GM12878 (cell line): ENCODE measurements at regions of chr14 and their contacts with region 1.

Region 1: DNA sequence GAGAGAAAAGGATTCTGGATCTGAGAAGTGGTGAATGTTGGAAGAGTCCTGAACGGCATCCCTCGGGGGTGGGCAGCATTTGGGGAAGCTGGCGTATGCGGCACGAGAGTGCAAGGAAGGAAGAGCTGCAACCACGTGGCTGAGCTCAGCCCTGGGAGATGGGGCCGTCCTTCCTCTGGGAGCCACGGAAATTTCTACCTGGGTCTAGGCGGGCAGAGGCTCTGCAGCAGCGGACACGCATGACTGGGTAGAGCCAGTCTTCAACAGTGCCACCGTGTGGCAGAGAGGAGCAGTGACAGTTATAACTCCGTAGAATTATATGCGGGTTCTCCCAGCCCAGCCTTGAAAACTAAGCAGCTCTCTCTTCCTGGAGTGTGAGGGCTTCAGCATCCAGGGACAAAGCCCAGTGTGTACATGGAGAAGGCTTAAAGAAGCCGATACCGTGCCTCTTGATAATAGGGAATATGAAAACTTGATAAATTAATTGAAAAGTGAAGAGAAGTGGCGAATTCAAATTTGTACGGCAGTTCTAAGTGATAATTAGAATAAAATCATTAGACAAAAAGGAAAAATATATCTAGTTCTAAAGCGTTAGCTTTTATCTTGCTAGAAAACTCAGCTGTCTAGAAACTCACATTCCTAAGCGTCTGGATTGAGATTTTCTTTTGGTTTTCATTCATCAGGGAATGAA is 82.9 kb upstream of the STXBP6 start:
- DNase-seq: no peak
- ATAC-seq: peak; percentile 97
- H3K4me3 ChIP-seq: no peak overlapping the region
- H3K27ac ChIP-seq: no peak overlapping the region
- H3K4me1 ChIP-seq: no peaks in the 10 kb centered on the region
- H3K27me3 ChIP-seq: no peaks in the 10 kb centered on the region
- CTCF ChIP-seq: peak; percentile 76 to 79 (median 76)
- EP300 ChIP-seq: no peak
- POLR2A ChIP-seq: no peak
- RAD21 ChIP-seq: peak; percentile 57

Region 2: DNA sequence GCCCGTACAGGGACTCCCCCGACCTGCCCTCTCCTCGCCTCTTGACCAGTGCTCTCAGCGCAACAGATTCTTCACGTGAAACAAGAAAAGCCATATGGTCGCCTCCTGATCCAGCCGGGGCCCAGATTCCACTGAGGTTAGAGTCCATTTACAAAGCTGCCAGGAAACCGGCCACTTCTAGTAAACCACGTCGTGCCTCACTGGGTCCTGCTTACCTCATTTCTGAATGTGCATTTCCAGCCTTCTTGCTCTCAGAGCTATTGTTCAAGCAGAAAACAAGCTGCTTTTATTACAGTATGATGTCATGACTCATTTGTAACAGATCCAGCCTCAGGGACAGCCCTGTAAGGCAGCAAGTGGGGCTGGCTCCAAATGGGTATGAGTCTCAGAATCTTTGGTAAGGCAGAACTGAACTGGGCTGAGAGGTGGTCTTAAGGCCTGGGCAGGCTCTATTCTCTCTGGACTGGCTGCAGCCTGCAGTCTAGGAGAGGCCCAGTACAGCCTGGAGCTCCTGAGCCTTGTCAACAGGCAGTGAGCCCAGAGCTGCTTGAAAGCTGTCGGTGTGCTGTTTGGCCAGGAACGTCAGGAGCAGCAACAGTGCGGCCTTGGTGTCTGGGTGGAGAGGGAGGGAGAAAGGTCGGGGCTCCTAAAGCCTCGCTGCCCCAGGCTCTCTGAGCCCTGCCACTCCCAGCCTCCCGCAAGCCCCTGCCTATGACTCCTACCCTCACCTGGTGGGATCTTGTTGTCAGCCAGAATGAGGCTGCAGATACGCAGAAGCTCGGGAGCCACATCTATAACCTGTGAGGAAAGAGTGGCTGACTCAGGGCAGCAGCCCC is 952.7 kb before region 1 on chr14:
- CTCF ChIA-PET with region 1: no interaction called
- POLR2A ChIA-PET with region 1: no interaction called
- RAD21 ChIA-PET with region 1: no interaction called
- SMC1A ChIA-PET with region 1: no interaction called
- in situ Hi-C with region 1: no loop called
- intact Hi-C with region 1: no loop called
- DNase-seq: no peak
- ATAC-seq: peak; percentile 52
- H3K4me3 ChIP-seq: no peak overlapping the region
- H3K27ac ChIP-seq: no peak overlapping the region
- H3K4me1 ChIP-seq: no peaks in the 10 kb centered on the region
- H3K27me3 ChIP-seq: no peaks in the 10 kb centered on the region
- CTCF ChIP-seq: no peak
- EP300 ChIP-seq: no peak
- POLR2A ChIP-seq: peak; percentile 62
- RAD21 ChIP-seq: no peak

Region 3: DNA sequence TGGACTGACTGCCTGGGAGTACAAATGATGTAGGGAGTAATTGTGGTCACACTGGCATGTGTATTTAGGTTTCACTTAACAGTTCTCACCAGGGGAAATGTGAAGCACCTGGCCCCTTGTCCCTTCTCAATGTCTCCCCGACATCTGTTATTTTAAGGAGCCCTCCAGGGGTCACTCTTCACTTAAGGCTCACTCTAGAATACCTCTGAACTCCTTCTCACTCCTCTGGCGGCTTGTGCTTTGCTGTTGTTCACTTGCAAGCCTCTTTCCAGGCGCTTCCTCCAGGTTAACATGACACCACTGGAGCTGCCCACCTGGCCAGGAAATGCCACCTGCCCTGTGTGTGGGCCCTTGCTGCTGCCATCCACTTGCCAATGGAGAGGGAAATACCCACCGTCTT is 442.4 kb before region 1 on chr14:
- CTCF ChIA-PET with region 1: interaction called, 12 read pairs
- POLR2A ChIA-PET with region 1: no interaction called
- RAD21 ChIA-PET with region 1: interaction called, 3 read pairs
- SMC1A ChIA-PET with region 1: no interaction called
- in situ Hi-C with region 1: no loop called
- intact Hi-C with region 1: no loop called
- DNase-seq: no peak
- ATAC-seq: peak; percentile 67
- H3K4me3 ChIP-seq: no peak overlapping the region
- H3K27ac ChIP-seq: no peak overlapping the region
- H3K4me1 ChIP-seq: peaks cover 18% of the 10 kb centered on the region
- H3K27me3 ChIP-seq: no peaks in the 10 kb centered on the region
- CTCF ChIP-seq: peak; percentile 30 to 37 (median 36); a peak in 5 of 6 replicates
- EP300 ChIP-seq: no peak
- POLR2A ChIP-seq: no peak
- RAD21 ChIP-seq: peak; percentile 58

Region 4: DNA sequence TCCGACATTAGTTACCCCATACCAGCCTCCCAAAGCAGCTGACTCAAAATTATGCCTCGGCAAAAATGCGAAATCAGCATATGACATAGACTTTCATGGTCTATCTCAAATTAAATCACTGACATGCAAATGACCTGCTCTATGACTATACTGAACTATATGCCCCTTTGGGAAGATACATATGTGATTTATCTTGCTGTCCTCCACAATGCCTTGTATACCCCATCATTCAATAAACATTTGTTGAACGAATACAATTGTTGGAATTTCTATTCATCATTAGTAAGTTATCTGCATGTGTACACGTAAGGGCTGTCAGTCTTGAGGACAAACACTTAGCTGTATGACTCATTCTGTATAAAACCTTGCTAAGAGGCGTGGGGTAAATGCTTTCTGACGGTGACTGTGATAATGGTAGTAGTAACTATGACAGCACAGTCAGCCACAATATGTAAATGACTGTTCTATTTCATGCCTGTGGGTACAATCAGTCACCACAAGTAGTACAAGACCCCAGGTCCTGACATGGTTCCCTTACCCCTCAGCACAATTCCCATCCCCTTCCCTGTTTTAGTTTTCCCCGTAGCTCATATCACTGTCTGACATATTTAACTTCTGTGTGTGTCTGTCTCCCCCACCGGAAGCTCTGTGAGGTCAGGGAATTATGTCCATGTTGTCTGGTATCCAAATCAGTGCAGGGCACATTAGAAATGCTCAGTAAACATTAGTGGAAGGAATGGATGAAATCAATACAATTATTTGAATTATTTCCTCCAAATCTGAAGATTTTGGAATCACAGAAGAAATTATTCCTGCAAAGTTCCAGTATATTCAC is 125.7 kb before region 1 on chr14:
- CTCF ChIA-PET with region 1: interaction called, 14 read pairs
- POLR2A ChIA-PET with region 1: no interaction called
- RAD21 ChIA-PET with region 1: interaction called, 4 read pairs
- SMC1A ChIA-PET with region 1: interaction called, 5 read pairs
- in situ Hi-C with region 1: no loop called
- intact Hi-C with region 1: no loop called
- DNase-seq: no peak
- ATAC-seq: peak; percentile 70
- H3K4me3 ChIP-seq: no peak overlapping the region
- H3K27ac ChIP-seq: no peak overlapping the region
- H3K4me1 ChIP-seq: no peaks in the 10 kb centered on the region
- H3K27me3 ChIP-seq: no peaks in the 10 kb centered on the region
- CTCF ChIP-seq: no peak
- EP300 ChIP-seq: peak; percentile 56 to 84; a peak in 3 of 4 replicates
- POLR2A ChIP-seq: no peak
- RAD21 ChIP-seq: no peak

Region 5: DNA sequence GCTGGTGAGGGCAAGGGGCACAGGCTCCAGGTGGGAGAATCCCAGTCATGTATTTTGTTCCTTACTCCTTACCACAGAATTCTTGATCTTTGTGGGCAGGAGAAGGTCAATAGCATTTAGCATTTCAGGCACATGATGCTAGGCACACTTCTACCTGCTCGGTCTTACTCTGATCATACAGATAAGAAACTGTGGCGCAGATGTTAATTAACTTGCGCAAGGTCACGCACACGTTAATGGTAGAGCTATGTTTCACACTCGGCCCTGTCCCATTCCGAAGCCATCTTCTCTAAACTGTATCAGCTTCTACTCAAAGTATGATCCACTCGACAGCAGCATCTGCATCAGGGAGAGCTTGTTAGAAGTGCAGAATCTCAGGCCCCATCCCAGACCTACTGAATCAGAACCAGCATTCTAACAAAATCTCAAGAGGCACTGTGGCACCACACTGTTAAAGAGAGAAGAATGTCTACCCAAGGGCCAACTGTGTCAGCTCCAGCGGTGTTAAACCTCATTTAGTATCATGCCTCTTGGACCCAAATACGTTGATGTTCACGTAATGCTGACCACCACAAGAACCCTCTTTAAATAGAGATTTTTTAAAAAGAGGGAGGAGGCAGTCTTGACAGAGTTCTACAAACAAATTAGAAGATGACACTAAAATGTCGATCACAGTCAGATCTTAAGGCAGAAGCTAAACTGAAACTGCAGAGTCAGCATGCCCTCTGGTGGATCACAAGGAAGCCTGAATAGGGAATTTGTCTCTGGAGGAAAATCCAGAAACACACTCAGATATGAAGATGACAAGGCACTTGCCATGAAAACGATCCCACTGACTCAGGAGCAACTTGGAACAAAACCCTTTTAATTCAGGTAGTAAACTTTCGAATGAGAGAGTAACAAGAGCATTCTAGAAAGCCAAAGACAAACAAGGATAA is 90.2 kb before region 1 on chr14:
- CTCF ChIA-PET with region 1: interaction called, 10 read pairs
- POLR2A ChIA-PET with region 1: no interaction called
- RAD21 ChIA-PET with region 1: interaction called, 3 read pairs
- SMC1A ChIA-PET with region 1: interaction called, 21 read pairs
- in situ Hi-C with region 1: no loop called
- intact Hi-C with region 1: no loop called
- DNase-seq: no peak
- ATAC-seq: no peak
- H3K4me3 ChIP-seq: no peak overlapping the region
- H3K27ac ChIP-seq: no peak overlapping the region
- H3K4me1 ChIP-seq: no peaks in the 10 kb centered on the region
- H3K27me3 ChIP-seq: no peaks in the 10 kb centered on the region
- CTCF ChIP-seq: 0 out of 6 replicates have a peak, but pooled peaks of 1 of the 3 experiments have one; percentile 8
- EP300 ChIP-seq: no peak
- POLR2A ChIP-seq: no peak
- RAD21 ChIP-seq: no peak

Region 6: GRCh38 chr14:25056688-25057078 is 76.2 kb before region 1 on chr14:
- CTCF ChIA-PET with region 1: interaction called, 5 read pairs
- POLR2A ChIA-PET with region 1: no interaction called
- RAD21 ChIA-PET with region 1: interaction called, 8 read pairs
- SMC1A ChIA-PET with region 1: interaction called, 17 read pairs
- in situ Hi-C with region 1: no loop called
- intact Hi-C with region 1: no loop called
- DNase-seq: no peak
- ATAC-seq: peak; percentile 79
- H3K4me3 ChIP-seq: no peak overlapping the region
- H3K27ac ChIP-seq: no peak overlapping the region
- H3K4me1 ChIP-seq: no peaks in the 10 kb centered on the region
- H3K27me3 ChIP-seq: peaks cover 0 to 7% of the 10 kb centered on the region in 2 experiments; a peak in 1 of 4 replicates
- CTCF ChIP-seq: no peak
- EP300 ChIP-seq: no peak
- POLR2A ChIP-seq: no peak
- RAD21 ChIP-seq: no peak

Region 7: DNA sequence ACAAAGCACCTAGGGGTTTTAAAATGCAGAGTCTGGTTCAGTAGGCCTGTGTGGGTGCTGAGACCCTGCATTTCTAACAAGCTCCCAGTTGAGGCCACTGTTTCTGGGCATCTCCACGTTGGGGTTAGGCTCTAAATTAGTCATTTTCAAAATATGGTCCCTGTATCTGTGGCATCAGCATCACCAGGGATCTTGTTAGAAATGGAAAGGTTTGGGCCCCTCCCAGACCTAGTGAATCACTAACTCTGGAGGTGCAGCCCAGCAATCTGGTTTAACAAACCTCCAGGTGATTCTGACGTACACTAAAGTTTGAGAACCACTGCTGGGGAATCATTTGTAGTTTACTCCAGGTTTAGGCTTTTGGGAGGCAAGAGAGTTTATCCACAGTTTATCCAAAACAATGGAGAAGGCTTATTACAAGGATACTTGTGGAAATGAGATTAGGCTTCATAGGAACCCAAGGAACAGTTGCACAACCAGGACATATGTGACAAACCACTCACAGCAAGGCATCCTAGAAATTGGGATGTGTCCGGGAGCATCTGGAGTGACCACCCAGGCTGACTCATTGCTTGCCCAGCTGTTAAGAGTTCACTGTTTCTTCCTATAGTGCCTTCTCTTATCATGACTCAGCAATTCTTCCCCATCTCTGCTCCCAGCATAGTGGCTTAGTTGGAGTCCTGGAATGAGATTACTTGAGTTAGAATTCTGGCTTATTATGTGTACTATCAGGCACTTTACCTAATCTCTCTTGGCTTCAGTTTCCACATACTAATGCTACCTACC is 11.3 kb before region 1 on chr14:
- CTCF ChIA-PET with region 1: interaction called, 22 read pairs
- POLR2A ChIA-PET with region 1: no interaction called
- RAD21 ChIA-PET with region 1: interaction called, 6 read pairs
- SMC1A ChIA-PET with region 1: interaction called, 13 read pairs
- in situ Hi-C with region 1: no loop called
- intact Hi-C with region 1: no loop called
- DNase-seq: no peak
- ATAC-seq: peak; percentile 9
- H3K4me3 ChIP-seq: no peak overlapping the region
- H3K27ac ChIP-seq: no peak overlapping the region
- H3K4me1 ChIP-seq: no peaks in the 10 kb centered on the region
- H3K27me3 ChIP-seq: no peaks in the 10 kb centered on the region
- CTCF ChIP-seq: no peak
- EP300 ChIP-seq: no peak
- POLR2A ChIP-seq: no peak
- RAD21 ChIP-seq: no peak

Region 8: DNA sequence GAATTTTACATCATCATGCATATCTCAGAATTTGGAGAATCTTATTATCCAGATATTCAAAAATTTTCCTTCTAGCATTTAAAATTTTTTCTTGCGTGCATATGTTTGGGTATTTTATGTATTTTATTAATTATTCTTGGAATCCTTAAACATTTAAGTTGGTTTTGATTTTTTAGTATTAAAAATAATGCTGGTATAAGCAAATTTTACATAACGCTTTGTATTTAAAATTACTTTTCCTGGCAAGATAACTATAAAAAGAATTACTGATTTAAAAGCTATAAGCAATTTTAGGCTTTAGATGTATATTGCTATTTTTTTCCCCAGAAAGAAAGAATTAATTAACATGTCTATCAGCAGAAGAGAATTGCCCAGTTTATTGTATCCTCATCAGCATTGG is 141.7 kb after region 1 on chr14:
- CTCF ChIA-PET with region 1: no interaction called
- POLR2A ChIA-PET with region 1: no interaction called
- RAD21 ChIA-PET with region 1: no interaction called
- SMC1A ChIA-PET with region 1: no interaction called
- in situ Hi-C with region 1: no loop called
- intact Hi-C with region 1: no loop called
- DNase-seq: no peak
- ATAC-seq: no peak
- H3K4me3 ChIP-seq: no peak overlapping the region
- H3K27ac ChIP-seq: no peak overlapping the region
- H3K4me1 ChIP-seq: no peaks in the 10 kb centered on the region
- H3K27me3 ChIP-seq: no peaks in the 10 kb centered on the region
- CTCF ChIP-seq: no peak
- EP300 ChIP-seq: no peak
- POLR2A ChIP-seq: no peak
- RAD21 ChIP-seq: no peak

Region 9: GRCh38 chr14:25349269-25349668 is 216.4 kb after region 1 on chr14:
- CTCF ChIA-PET with region 1: no interaction called
- POLR2A ChIA-PET with region 1: no interaction called
- RAD21 ChIA-PET with region 1: no interaction called
- SMC1A ChIA-PET with region 1: no interaction called
- in situ Hi-C with region 1: no loop called
- intact Hi-C with region 1: no loop called
- DNase-seq: no peak
- ATAC-seq: no peak
- H3K4me3 ChIP-seq: no peak overlapping the region
- H3K27ac ChIP-seq: no peak overlapping the region
- H3K4me1 ChIP-seq: no peaks in the 10 kb centered on the region
- H3K27me3 ChIP-seq: no peaks in the 10 kb centered on the region
- CTCF ChIP-seq: no peak
- EP300 ChIP-seq: no peak
- POLR2A ChIP-seq: no peak
- RAD21 ChIP-seq: no peak